Ascending aorta (tissue), 2 donors: ENCODE measurements at regions of chr7 and their contacts with region 1.

Region 1: DNA sequence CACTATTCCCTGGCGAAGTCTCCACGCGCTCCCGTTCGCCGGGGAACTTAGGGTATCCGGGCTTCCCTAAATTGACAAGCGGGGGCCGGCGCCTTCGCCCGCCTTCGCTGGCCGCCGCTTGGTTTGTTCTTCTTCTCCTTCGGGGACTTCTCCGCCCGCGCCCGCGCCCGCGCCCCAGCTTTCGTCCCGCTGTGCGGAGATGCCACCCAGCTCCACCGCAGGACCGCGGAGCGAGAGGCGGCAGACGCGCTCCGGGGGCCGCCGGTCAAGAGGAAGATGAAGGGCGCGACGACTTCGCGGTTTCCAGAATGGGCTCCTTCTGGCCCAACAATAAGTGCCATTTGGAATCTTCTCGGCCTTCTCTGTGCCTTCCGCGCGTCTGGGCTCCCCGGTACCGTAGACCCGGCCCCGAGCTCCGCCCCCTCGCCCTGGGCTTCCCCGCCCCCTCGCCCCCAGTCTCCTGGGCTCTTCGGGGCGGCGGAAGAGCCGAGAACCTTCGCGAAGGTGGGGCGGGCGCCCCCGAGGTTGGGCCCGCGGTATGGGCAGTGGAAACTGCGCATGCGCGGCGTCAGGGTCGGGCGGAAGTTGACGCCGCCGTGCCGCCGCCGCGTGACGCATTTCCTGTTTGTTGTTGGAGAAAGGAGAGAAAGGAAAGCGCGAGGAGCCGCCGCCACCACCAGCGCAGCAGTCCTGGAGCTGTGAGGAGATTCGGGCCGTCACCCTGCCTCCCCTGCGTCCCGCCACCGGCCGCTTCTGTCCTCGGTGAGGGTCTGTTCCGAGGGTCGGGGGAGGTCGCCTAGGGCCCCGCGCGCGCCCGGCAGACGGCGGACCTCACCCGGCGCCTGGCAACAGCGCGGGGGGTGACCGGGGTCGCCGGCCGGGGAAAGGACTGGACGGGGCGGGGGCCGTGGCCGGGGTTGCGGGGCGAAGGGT is at the start of gene DNAJB6:
- DNase-seq: peak; percentile 77 to 96
- H3K4me3 ChIP-seq: peak within 1 kb of the TSS; percentile 83 to 91
- H3K27ac ChIP-seq: peak within 1 kb of the TSS; percentile 97
- H3K4me1 ChIP-seq: peaks cover 3 to 6% of the 10 kb centered on the region in 2 donors
- H3K27me3 ChIP-seq: no peaks in the 10 kb centered on the region
- CTCF ChIP-seq: no peak
- total RNA-seq, gene DNAJB6: 79.1 TPM

Region 2: GRCh38 chr7:156892821-156893706 is 443.6 kb before region 1 on chr7 and contains the start of gene LMBR1:
- intact Hi-C with region 1: loop called (anchors 10 kb)
- DNase-seq: peak; percentile 63 to 96
- H3K4me3 ChIP-seq: peak within 1 kb of the TSS; percentile 84 to 94
- H3K27ac ChIP-seq: peak within 1 kb of the TSS; percentile 74 to 90
- H3K4me1 ChIP-seq: peaks cover 0 to 8% of the 10 kb centered on the region in 2 donors
- H3K27me3 ChIP-seq: no peaks in the 10 kb centered on the region
- CTCF ChIP-seq: peak; percentile 55 to 79 (median 60)
- total RNA-seq, gene LMBR1: 14.8 TPM

Region 3: DNA sequence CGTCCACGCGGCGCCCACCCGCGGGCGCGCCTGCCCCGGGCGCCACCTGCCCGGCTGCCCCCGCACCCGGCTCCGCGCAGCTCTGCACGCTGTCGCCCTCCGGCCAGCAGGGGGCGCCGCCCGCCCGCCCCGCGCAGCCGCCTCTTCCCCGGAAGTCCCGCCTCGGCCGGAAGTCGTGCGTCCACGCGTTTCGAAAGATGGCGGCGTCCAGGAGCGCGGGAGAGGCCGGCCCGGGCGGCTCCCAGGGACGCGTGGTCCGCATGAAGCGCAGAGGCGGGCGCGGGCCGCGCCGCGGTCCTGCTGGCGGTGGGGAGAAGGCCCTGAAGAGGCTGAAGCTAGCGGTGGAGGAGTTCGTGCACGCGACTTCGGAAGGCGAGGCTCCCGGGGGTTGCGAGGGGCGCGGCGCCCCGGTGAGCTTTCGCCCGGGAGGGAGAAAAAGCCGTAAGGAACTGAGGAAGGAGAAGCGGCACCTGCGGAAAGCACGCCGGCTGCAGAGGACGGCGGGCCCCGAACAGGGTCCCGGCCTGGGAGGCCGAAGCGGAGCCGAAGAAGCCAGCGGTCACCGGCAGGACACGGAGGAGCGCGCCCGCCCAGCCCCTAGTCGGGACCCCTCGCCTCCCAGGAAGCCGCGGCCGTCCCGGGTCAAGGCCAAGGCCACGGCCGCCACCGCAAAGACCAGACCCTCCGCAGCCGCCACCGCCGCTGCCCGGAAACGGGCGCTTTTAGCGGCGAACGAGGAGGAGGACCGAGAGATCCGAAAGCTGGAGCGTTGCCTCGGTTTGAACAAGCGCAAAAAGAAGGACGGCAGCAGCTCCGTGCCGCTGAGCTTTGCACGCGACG is 386.9 kb before region 1 on chr7 and contains the start of gene NOM1:
- intact Hi-C with region 1: loop called (anchors 2 kb)
- DNase-seq: peak; percentile 31 to 91
- H3K4me3 ChIP-seq: peak within 1 kb of the TSS; percentile 53 to 99
- H3K27ac ChIP-seq: peak within 1 kb of the TSS in 1 of 2 donors; percentile 41
- H3K4me1 ChIP-seq: peaks cover 10 to 23% of the 10 kb centered on the region in 2 donors
- H3K27me3 ChIP-seq: no peaks in the 10 kb centered on the region
- CTCF ChIP-seq: peak; percentile 59 to 93 (median 62)
- total RNA-seq, gene NOM1: 16.1 TPM

Region 4: DNA sequence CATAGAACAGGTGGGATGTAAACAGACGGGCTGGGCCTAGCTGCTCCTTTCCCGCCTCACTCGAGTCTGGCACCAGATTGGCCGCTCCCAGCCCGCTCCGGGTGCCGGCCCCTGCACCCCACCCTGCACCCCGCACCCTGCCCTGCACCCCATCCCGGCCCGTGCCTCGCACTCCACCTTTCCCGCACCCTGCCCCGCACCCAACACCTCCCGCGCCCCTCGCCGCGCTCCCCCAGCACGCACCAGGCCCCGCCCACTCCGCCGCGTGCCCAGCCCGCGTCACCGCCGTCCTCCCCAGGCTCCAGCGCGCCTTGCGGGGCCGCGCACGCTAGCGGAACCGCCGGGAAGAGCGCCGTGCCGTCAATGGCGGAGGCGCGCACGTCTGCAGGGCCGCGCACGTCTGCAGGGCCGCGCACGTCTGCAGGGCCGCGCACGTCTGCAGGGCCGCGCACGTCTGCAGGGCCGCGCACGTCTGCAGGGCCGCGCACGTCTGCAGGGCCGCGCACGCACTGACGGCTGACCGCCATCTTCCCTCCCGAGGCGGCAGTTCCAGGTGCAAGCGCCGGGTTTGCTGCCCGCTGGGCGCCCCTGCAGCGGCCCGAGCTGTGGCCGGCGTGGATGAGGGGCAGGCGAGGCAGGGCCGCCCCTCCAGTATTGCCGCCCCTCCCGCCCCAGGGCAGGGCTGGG is 198.1 kb before region 1 on chr7 and contains the start of gene UBE3C:
- intact Hi-C with region 1: loop called (anchors 5 kb)
- DNase-seq: peak; percentile 35 to 93
- H3K4me3 ChIP-seq: peak within 1 kb of the TSS; percentile 72 to 94
- H3K27ac ChIP-seq: peak within 1 kb of the TSS; percentile 87 to 90
- H3K4me1 ChIP-seq: peaks cover 9 to 16% of the 10 kb centered on the region in 2 donors
- H3K27me3 ChIP-seq: no peaks in the 10 kb centered on the region
- CTCF ChIP-seq: peak in 1 of 3 experiments; percentile 10
- total RNA-seq, gene UBE3C: 31.7 TPM

Region 5: DNA sequence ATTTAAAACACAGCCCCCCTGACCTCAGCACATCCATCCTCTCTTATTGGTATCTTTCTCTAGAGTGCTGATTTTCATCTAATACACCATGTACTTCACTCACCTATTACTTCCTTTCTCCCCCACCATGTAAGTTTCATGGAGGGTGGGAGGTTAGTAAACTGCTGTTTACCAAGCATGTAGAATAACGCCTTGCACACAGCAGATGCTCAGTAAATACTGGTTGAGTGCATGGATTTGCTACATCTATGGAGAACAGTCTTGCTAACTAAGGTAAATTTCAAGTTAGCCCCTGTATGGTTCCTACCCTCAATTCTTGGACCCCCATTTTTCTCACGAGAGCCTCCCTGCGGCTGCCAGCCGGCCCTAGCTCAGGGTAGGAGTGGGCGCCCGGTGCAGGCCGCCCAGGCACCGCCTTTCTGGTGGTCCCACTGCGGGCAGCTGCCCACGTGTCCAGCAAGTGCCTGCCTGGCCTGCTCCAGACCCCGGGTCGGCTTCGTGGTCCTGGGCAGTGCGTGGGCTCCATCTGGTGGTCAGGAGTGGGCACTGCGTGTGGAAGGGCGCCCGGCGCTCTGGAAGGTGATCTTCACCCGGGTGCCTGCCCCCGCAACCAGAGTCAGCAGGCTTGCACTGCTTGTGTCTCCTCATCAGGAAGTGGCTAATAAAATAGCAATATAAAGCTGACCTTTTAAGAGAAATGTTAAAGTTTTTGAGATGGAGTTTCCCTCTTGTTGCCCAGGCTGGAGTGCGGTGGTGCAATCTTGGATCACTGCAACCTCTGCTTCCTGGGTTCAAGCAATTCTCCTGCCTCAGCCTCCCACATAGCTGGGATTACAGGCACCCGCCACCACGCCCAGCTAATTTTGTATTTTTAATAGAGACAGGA is 63.2 kb before region 1 on chr7:
- intact Hi-C with region 1: loop called (anchors 2 kb)
- DNase-seq: peak in 1 of 2 donors; percentile 87
- H3K4me3 ChIP-seq: peak overlapping the region in 1 of 2 donors; percentile 1
- H3K27ac ChIP-seq: peak overlapping the region; percentile 95 to 98
- H3K4me1 ChIP-seq: peaks cover 21 to 25% of the 10 kb centered on the region in 2 donors
- H3K27me3 ChIP-seq: no peaks in the 10 kb centered on the region
- CTCF ChIP-seq: peak; percentile 93 to 100 (median 99)

Region 6: DNA sequence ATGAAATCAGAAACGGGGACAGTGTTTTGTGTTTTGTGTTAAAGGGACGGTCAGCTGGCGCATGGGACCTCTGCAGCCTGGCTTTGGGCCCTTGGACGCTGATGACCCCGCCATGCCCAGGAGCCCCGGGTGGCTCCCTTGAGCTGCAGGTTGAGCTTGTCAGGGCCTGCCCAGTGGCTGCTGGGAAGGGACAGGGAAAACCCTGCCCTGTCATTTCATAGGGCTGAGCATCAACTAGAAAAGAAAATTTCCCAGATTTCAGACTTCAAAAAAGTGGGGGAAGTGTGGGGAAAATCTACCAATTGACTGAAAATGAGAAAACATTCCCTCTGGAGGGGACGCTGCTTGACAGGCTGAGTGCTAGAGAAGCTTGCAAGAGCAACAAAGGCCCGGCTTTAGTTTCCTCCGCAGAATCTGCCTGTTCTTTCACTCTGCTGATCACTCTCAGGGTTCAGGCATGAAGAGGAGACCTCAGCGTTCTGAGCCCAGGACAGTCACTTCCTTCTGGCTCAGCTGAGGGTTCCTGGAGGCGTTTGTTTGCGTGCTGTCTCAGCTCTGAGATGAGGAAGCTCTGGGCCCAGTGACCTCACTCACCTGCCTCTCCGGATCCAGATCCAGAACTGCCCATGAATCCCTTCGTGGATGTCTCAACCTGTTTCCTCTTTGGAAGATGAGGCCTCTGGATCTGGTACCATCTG is 18.5 kb before region 1 on chr7:
- intact Hi-C with region 1: no loop called
- DNase-seq: peak in 1 of 2 donors; percentile 33
- H3K4me3 ChIP-seq: no peak overlapping the region
- H3K27ac ChIP-seq: no peak overlapping the region
- H3K4me1 ChIP-seq: no peaks in the 10 kb centered on the region
- H3K27me3 ChIP-seq: no peaks in the 10 kb centered on the region
- CTCF ChIP-seq: no peak

Region 7: DNA sequence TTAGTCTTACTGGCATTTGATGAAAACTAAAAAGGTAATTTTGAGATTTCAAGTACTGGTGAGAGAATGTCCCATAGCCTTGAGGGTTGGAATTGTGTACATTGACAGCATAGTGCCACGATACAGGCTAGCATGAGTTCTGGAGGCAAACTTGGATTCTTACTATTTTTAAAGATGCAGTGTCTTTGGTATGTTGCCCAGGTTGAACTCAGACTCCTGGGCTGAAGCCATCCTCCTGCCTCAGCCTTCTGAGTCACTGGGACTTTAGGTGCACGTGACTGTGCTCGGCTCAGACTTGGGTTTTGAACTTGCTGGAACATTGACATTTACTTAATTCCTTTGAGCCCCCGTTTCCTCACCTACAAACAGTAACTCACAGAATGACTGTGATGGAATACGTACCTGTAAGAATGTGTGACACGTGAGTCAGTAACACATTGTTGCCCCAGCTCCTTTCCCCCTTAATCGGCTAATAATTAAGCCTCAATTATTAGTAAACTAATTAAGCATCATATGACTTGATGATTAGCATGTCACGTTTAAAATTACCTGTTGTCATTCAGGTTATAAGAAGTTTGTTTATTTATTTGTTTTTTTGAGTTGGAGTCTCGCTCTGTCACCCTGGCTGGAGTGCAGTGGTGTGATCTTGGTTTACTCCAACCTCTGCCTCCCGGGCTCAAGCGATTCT is 10.7 kb after region 1 on chr7:
- intact Hi-C with region 1: loop called (anchors 1 kb)
- DNase-seq: peak; percentile 46 to 89
- H3K4me3 ChIP-seq: peak overlapping the region; percentile 47 to 50
- H3K27ac ChIP-seq: peak overlapping the region; percentile 61 to 71
- H3K4me1 ChIP-seq: peaks cover 3 to 26% of the 10 kb centered on the region in 2 donors
- H3K27me3 ChIP-seq: no peaks in the 10 kb centered on the region
- CTCF ChIP-seq: no peak

Region 8: GRCh38 chr7:157386979-157387800 is 50.5 kb after region 1 on chr7:
- intact Hi-C with region 1: loop called (anchors 2 kb)
- DNase-seq: peak; percentile 53 to 95
- H3K4me3 ChIP-seq: peak overlapping the region in 1 of 2 donors; percentile 11
- H3K27ac ChIP-seq: peak overlapping the region; percentile 73
- H3K4me1 ChIP-seq: peaks cover 4 to 18% of the 10 kb centered on the region in 2 donors
- H3K27me3 ChIP-seq: no peaks in the 10 kb centered on the region
- CTCF ChIP-seq: peak; percentile 75 to 89 (median 89)